Activated naive CD4-positive, alpha-beta T cell treated with anti-CD3 and anti-CD28 coated beads, Interleukin-2, amount 10 ng/mL, durations not matched to agents 7 days and 5 days (primary cell): ENCODE measurements at regions of chr17 and their contacts with region 1.

Region 1: GRCh38 chr17:65231662-65232335 is 94.6 kb downstream of the RGS9 start:
- DNase-seq: peak; percentile 65
- H3K4me3 Mint-ChIP-seq: no peak overlapping the region
- H3K27ac Mint-ChIP-seq: no peak overlapping the region
- H3K4me1 Mint-ChIP-seq: peaks cover 33% of the 10 kb centered on the region
- H3K27me3 Mint-ChIP-seq: peaks cover 34% of the 10 kb centered on the region

Region 2: DNA sequence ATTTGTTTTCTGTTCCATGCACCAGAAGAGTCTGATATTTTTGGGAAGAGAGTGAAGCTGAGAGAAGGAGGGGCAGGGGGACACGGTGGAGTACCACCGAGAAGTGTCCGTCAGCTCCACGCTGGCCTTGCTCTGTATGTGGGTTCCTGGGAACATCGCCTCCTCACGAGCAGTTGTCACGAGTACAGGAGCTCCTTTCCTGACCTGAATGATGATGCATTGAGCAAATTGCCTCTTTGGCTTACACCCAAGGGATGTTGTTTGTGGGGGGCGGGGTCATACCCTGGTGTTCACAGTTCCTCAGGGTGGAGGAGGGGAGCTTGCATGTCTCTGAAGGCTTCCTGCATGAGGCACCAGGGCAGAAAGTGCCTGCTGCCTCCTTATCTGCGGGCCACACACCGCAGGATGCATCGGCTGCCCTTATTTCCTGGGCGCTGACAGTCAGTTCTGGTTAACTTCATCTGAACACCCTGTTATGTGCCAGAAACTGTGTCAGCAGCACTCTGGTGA is 58.5 kb before region 1 on chr17:
- CTCF ChIA-PET with region 1: no interaction called
- DNase-seq: peak; percentile 87
- H3K4me3 Mint-ChIP-seq: peak overlapping the region; percentile 17
- H3K27ac Mint-ChIP-seq: no peak overlapping the region
- H3K4me1 Mint-ChIP-seq: peaks cover 17% of the 10 kb centered on the region
- H3K27me3 Mint-ChIP-seq: peaks cover 15% of the 10 kb centered on the region

Region 3: DNA sequence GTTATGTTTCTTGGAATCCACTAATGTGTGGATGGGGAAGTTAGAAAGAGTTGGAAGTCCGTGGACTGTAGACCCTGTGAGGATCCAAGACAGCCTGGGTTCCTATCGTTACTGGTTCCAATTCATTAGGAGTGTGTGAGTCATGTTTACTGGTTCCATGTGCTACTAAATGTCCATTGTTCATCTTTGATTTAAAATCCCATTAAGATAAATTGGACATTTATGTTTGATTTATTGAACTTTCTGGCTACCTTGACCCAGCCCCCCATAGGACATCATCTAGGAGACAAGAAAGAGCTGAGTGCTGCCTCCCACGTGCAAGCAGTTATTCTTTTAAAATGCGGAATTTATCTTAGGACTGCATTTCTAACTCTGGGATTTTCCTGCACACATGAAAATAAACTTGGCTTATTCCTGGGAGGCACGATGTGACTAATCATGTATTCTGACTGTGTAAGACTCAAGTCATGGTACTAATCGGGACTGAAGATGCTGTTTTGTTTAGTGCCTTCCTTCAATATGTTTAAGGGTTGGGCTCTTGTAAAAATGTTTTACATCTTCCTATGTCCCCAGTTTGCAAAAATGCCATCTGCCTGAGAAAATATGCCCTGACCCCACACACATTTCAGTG is 41.2 kb before region 1 on chr17:
- CTCF ChIA-PET with region 1: no interaction called
- DNase-seq: no peak
- H3K4me3 Mint-ChIP-seq: no peak overlapping the region
- H3K27ac Mint-ChIP-seq: no peak overlapping the region
- H3K4me1 Mint-ChIP-seq: peaks cover 5% of the 10 kb centered on the region
- H3K27me3 Mint-ChIP-seq: peaks cover 15% of the 10 kb centered on the region

Region 4: GRCh38 chr17:65208717-65209116 is 23.1 kb before region 1 on chr17:
- CTCF ChIA-PET with region 1: no interaction called
- DNase-seq: no peak
- H3K4me3 Mint-ChIP-seq: no peak overlapping the region
- H3K27ac Mint-ChIP-seq: no peak overlapping the region
- H3K4me1 Mint-ChIP-seq: no peaks in the 10 kb centered on the region
- H3K27me3 Mint-ChIP-seq: peaks cover 60% of the 10 kb centered on the region

Region 5: GRCh38 chr17:65265276-65265675 is 33.5 kb after region 1 on chr17:
- CTCF ChIA-PET with region 1: interaction called, 15 read pairs
- DNase-seq: no peak
- H3K4me3 Mint-ChIP-seq: no peak overlapping the region
- H3K27ac Mint-ChIP-seq: no peak overlapping the region
- H3K4me1 Mint-ChIP-seq: peaks cover 35% of the 10 kb centered on the region
- H3K27me3 Mint-ChIP-seq: peaks cover 14% of the 10 kb centered on the region

Region 6: GRCh38 chr17:65381152-65381551 is 149.4 kb after region 1 on chr17:
- CTCF ChIA-PET with region 1: no interaction called
- DNase-seq: no peak
- H3K4me3 Mint-ChIP-seq: no peak overlapping the region
- H3K27ac Mint-ChIP-seq: no peak overlapping the region
- H3K4me1 Mint-ChIP-seq: no peaks in the 10 kb centered on the region
- H3K27me3 Mint-ChIP-seq: peaks cover 4% of the 10 kb centered on the region

Region 7: GRCh38 chr17:66165513-66166123 is 933.8 kb after region 1 on chr17:
- CTCF ChIA-PET with region 1: interaction called, 35 read pairs
- DNase-seq: no peak
- H3K4me3 Mint-ChIP-seq: no peak overlapping the region
- H3K27ac Mint-ChIP-seq: no peak overlapping the region
- H3K4me1 Mint-ChIP-seq: peaks cover 2% of the 10 kb centered on the region
- H3K27me3 Mint-ChIP-seq: no peaks in the 10 kb centered on the region